AG04449 (cell line): ENCODE measurements at regions of chr20 and their contacts with region 1.

Region 1: GRCh38 chr20:12207875-12208274 is 290.2 kb downstream of the BTBD3 start:
- DNase-seq: no peak
- H3K4me3 ChIP-seq: no peak overlapping the region
- CTCF ChIP-seq: peak; percentile 72

Region 2: GRCh38 chr20:12012241-12013222 is 195.3 kb before region 1 on chr20:
- CTCF ChIA-PET with region 1: interaction called, 11 read pairs
- POLR2A ChIA-PET with region 1: no interaction called
- DNase-seq: no peak
- H3K4me3 ChIP-seq: no peak overlapping the region
- CTCF ChIP-seq: peak; percentile 84

Region 3: GRCh38 chr20:12229891-12230290 is 22.0 kb after region 1 on chr20:
- CTCF ChIA-PET with region 1: no interaction called
- POLR2A ChIA-PET with region 1: no interaction called
- DNase-seq: no peak
- H3K4me3 ChIP-seq: no peak overlapping the region
- CTCF ChIP-seq: no peak

Region 4: GRCh38 chr20:12255461-12255970 is 47.6 kb after region 1 on chr20:
- CTCF ChIA-PET with region 1: no interaction called
- POLR2A ChIA-PET with region 1: no interaction called
- DNase-seq: no peak
- H3K4me3 ChIP-seq: no peak overlapping the region
- CTCF ChIP-seq: no peak